Endothelial cell of umbilical vein (primary cell): ENCODE measurements at regions of chrX and their contacts with region 1.

Region 1: DNA sequence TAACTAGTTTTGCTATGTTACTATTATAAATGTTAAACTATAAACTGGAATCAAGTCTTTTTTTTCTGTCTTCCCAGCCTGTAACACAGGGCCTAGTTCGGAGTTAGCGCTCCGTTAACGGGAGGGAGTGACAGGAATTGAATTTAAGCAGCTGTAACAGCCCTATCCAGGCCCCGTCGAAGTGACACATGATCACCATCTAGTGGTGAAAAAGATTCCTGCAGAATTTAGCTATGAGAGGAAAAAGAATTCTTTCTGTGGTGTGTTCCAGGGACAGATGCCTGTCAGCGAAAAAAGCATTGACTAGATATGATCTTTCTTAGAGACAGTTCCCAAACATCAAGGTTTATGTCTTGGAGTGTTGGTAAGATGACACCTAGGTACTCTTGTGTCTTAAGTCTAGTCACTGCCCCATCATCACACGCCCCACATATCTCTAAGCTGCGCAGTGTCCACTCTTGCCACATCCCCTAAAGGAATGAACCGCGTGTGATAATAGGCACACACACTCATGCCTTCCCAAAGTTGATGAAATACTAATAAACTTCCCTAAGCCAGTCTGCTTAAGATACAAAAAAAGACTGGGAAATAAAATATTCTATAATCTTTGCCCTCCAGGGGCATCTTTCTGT is 2.0 kb downstream of the GAB3 start:
- DNase-seq: peak; percentile 69
- H3K4me3 ChIP-seq: no peak overlapping the region
- H3K27ac ChIP-seq: peak overlapping the region; percentile 28
- H3K4me1 ChIP-seq: peaks cover 6% of the 10 kb centered on the region
- H3K27me3 ChIP-seq: no peaks in the 10 kb centered on the region
- CTCF ChIP-seq: peak; percentile 44 to 56
- POLR2A ChIP-seq: no peak

Region 2: DNA sequence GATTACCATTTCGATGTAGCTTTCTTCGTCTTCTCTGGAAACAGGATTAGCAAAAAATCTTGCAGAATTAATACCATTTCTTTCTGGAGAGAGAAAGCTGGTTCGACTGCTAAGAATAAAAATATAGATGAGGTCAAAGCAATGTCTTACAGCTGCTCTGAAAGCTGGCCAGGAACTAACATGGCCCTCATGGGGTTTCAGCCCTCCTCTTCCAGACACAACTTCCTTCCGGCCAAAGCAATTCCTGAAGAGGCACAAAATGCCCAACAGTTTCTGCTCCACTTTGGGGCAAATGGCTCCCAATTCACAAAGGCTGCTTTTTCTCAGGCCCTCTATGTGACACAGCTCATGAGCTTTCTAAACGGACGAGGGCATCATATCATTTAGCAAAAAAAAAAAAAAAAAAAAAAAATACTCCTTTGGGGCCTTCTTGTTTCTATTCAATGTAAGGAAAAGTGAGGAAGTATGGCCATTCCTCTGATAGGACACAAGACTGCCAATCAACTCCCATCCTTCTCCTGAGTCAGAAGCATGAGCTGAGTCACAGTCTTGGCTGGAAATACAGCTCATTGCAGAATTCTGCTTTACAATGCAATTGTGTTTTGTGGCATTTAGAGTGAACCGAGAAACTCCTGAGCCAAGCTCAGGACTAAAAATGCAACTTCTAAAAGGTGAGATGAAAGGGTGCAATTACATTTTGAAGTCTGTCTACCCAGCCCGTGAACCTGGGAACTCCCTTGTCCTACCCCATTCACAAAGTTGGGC is 52.7 kb before region 1 on chrX:
- CTCF ChIA-PET with region 1: interaction called, 13 read pairs
- POLR2A ChIA-PET with region 1: no interaction called
- dilution Hi-C with region 1: no loop called
- intact Hi-C with region 1: no loop called
- DNase-seq: peak; percentile 3
- H3K4me3 ChIP-seq: no peak overlapping the region
- H3K27ac ChIP-seq: no peak overlapping the region
- H3K4me1 ChIP-seq: peaks cover 3% of the 10 kb centered on the region
- H3K27me3 ChIP-seq: no peaks in the 10 kb centered on the region
- CTCF ChIP-seq: no peak
- POLR2A ChIP-seq: no peak

Region 3: DNA sequence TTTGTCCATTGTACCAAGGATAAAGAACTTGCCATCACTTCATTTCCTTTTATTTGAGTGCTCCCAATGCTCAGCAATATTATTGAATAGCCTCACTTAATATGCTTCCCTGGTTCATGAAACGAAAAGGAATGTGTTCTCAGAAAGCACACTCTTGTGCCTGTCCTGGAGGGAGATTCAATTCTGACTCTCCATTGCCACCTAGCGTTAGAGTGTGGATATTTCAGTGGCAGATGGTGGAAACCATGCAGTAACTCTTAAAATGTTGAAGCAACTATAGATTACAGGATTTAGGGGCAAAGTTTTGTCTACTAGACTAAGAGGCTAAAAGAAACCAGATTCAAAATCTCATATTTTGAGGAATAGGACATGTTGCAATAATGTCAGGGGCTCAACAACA is 33.9 kb before region 1 on chrX:
- CTCF ChIA-PET with region 1: interaction called, 49 read pairs
- POLR2A ChIA-PET with region 1: no interaction called
- dilution Hi-C with region 1: no loop called
- intact Hi-C with region 1: loop called (anchors 1 kb)
- DNase-seq: peak; percentile 62
- H3K4me3 ChIP-seq: no peak overlapping the region
- H3K27ac ChIP-seq: no peak overlapping the region
- H3K4me1 ChIP-seq: peaks cover 40% of the 10 kb centered on the region
- H3K27me3 ChIP-seq: no peaks in the 10 kb centered on the region
- CTCF ChIP-seq: peak; percentile 43 to 52
- POLR2A ChIP-seq: no peak

Region 4: GRCh38 chrX:154727871-154728270 is 21.0 kb before region 1 on chrX:
- CTCF ChIA-PET with region 1: interaction called, 26 read pairs
- POLR2A ChIA-PET with region 1: no interaction called
- dilution Hi-C with region 1: no loop called
- intact Hi-C with region 1: no loop called
- DNase-seq: peak; percentile 86
- H3K4me3 ChIP-seq: peak overlapping the region in 1 of 3 experiments; percentile 12
- H3K27ac ChIP-seq: peak overlapping the region; percentile 95
- H3K4me1 ChIP-seq: peaks cover 73% of the 10 kb centered on the region
- H3K27me3 ChIP-seq: no peaks in the 10 kb centered on the region
- CTCF ChIP-seq: no peak
- POLR2A ChIP-seq: peak; percentile 24

Region 5: DNA sequence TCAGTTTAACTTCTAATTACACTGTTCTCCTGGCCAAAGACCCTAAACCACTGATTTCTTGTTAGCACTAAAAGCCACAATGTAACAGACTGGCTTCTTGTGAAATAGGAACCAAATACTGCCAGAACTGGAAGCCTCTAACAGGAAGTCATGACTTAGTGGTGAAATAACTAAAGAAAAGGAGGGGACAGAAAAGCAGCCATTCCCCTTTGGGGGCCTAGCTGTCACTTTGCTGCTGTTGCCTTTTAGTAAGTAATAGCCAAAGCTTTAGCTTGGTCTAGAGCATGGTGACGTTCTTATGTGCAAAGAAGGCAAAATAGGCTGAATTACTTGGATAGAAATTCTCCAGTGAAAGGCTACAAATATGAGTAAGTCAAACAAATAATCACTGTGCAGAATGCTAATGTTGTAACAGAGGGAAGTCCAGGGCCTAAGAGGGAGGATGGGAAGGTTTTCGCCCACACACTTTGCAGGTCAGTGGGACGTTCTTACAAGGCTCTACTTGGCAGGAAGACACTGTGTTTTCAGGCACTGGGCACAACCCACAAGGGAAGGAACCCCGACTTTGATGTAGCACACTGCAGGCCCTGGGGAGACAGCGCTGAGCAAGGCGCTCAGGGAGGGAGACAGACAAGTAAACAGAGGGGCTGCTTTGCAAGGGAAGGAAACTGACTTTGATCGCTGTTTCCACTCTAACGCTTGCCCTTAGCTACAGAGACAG is 14.6 kb before region 1 on chrX:
- CTCF ChIA-PET with region 1: interaction called, 26 read pairs
- POLR2A ChIA-PET with region 1: no interaction called
- dilution Hi-C with region 1: no loop called
- intact Hi-C with region 1: no loop called
- DNase-seq: peak; percentile 73
- H3K4me3 ChIP-seq: no peak overlapping the region
- H3K27ac ChIP-seq: peak overlapping the region; percentile 93
- H3K4me1 ChIP-seq: peaks cover 90% of the 10 kb centered on the region
- H3K27me3 ChIP-seq: no peaks in the 10 kb centered on the region
- CTCF ChIP-seq: no peak
- POLR2A ChIP-seq: no peak

Region 6: DNA sequence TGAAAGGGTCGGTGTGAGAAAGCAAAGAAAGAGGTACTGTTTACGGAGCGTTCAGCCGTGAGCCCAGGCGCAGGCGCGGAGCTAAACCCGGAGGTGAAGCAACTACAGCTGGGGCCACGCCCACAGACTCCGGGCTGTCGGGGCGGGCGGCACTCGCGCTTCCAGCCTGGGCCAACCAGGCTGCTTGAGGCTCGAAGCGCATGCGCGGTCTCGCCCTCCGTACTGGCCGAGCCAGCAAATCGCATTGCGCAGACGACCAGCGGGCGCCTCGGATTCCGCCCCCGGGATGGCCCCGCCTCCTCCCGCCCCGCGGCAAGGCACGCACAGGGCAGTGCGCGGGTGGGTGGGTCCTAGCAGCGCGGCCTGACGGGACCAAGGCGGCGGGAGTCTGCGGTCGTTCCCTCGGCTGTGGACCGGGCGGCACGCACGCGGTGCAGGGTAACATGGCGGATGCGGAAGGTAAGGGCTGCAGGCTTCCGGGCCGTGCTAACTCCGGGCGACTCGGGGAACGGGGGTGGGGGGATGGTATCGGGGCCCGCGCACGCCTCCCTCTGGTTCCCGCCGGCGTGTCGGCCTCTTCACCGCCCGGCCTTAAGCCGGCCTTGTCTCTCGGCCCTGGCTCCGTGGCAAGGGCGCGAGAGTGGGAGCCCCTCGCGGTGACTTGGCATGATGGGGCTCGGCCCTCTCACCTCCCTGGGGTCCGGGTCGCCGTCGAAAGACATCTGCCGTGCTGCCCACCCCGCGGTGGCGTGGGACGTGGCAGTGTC is 13.9 kb after region 1 on chrX and contains the start of gene DKC1:
- CTCF ChIA-PET with region 1: interaction called, 11 read pairs
- POLR2A ChIA-PET with region 1: no interaction called
- dilution Hi-C with region 1: no loop called
- intact Hi-C with region 1: loop called (anchors 1 kb)
- DNase-seq: peak; percentile 95
- H3K4me3 ChIP-seq: peak within 1 kb of the TSS; percentile 4 to 62 (median 59)
- H3K27ac ChIP-seq: peak within 1 kb of the TSS; percentile 36
- H3K4me1 ChIP-seq: peaks cover 10% of the 10 kb centered on the region
- H3K27me3 ChIP-seq: no peaks in the 10 kb centered on the region
- CTCF ChIP-seq: peak in 1 of 2 donors; percentile 9
- POLR2A ChIP-seq: peak; percentile 63
- total RNA-seq, gene DKC1: 63.7 and 69.1 TPM in 2 replicates

Region 7: DNA sequence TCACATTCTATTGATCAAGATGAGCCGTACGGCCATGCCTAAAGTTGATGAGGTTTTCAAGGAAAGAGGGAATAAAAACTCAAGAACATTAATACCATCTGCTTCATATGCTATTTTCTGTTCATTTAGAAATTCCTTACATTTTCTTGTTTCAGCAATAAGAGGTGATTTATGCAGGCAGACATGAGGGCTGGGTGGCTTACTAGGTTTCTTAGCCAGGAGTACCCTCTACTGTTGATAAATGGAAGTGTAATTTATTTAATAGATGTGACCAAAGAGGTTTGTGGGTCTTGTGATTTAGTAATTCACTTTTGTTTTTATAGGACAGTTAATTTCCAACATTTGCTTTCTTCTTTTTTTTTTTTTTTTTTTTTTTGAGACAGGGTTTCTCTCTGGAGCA is 92.0 kb after region 1 on chrX:
- CTCF ChIA-PET with region 1: interaction called, 17 read pairs
- POLR2A ChIA-PET with region 1: no interaction called
- dilution Hi-C with region 1: no loop called
- intact Hi-C with region 1: loop called (anchors 1 kb)
- DNase-seq: peak; percentile 64
- H3K4me3 ChIP-seq: no peak overlapping the region
- H3K27ac ChIP-seq: no peak overlapping the region
- H3K4me1 ChIP-seq: no peaks in the 10 kb centered on the region
- H3K27me3 ChIP-seq: no peaks in the 10 kb centered on the region
- CTCF ChIP-seq: peak; percentile 14 to 31
- POLR2A ChIP-seq: no peak